Ascending aorta (tissue), 2 donors: ENCODE measurements at regions of chr11 and their contacts with region 1.

Region 1: GRCh38 chr11:64304316-64305072 is 830 bp upstream of the ESRRA start:
- DNase-seq: peak; percentile 73 to 96
- H3K4me3 ChIP-seq: peak overlapping the region; percentile 59 to 73
- H3K27ac ChIP-seq: peak overlapping the region; percentile 68 to 86
- H3K4me1 ChIP-seq: peaks cover 14 to 22% of the 10 kb centered on the region in 2 donors
- H3K27me3 ChIP-seq: no peaks in the 10 kb centered on the region
- CTCF ChIP-seq: peak; percentile 63 to 89 (median 80)

Region 2: GRCh38 chr11:63945477-63946163 is 358.9 kb before region 1 on chr11:
- intact Hi-C with region 1: no loop called
- DNase-seq: peak in 1 of 2 donors; percentile 86
- H3K4me3 ChIP-seq: peak overlapping the region; percentile 27 to 33
- H3K27ac ChIP-seq: peak overlapping the region; percentile 64 to 75
- H3K4me1 ChIP-seq: peaks cover 3 to 9% of the 10 kb centered on the region in 2 donors
- H3K27me3 ChIP-seq: no peaks in the 10 kb centered on the region
- CTCF ChIP-seq: peak; percentile 75 to 84 (median 81)

Region 3: GRCh38 chr11:64204464-64204989 is 100.0 kb before region 1 on chr11:
- intact Hi-C with region 1: loop called (anchors 1 kb)
- DNase-seq: peak; percentile 44 to 91
- H3K4me3 ChIP-seq: no peak overlapping the region
- H3K27ac ChIP-seq: no peak overlapping the region
- H3K4me1 ChIP-seq: no peaks in the 10 kb centered on the region
- H3K27me3 ChIP-seq: no peaks in the 10 kb centered on the region
- CTCF ChIP-seq: peak; percentile 72 to 82 (median 79)

Region 4: DNA sequence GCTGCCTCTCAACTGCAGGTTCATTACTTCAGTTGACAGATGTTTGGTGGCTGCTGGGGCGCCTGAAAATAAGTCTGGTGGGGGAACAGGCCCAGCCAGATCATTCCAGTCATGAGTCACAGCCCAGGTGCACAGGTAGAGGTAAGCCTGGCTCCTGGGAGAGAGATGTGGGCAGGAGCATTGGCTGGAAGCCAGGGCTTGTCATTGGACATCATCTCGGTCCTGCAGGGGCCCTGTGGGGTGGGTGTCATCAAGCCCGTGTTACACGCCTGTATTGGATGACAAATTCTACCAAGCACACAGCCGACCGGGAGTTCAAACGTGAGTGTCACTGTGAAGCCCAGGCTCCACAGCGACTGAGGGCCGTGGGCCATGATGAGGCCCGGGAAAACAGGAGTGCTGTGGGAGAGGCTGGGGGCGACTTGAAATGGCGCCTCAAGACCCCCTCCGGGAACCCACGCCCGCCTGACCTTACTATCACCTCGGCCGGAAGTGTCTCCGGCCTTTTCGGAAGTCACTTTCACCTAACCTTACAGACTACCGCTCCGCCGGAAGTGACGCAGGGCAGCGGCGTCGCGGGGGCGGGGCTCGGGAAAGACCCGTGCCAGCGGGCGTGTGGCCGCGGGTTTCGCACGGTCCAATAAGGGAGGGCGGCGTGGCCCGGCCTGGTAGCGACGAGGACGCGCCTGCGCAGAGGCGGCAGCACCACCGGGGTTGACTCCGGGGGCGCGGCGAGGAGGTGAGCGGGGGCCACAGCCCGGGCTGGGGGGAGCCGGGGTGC is 63.9 kb before region 1 on chr11 and contains the start of gene FKBP2:
- intact Hi-C with region 1: loop called (anchors 2 kb)
- DNase-seq: peak; percentile 95 to 99
- H3K4me3 ChIP-seq: peak within 1 kb of the TSS; percentile 91 to 97
- H3K27ac ChIP-seq: peak within 1 kb of the TSS; percentile 99
- H3K4me1 ChIP-seq: peaks cover 3 to 33% of the 10 kb centered on the region in 2 donors
- H3K27me3 ChIP-seq: no peaks in the 10 kb centered on the region
- CTCF ChIP-seq: no peak
- total RNA-seq, gene FKBP2: 17.7 TPM

Region 5: GRCh38 chr11:64269380-64270234 is 34.9 kb before region 1 on chr11:
- intact Hi-C with region 1: loop called (anchors 1 kb)
- DNase-seq: peak; percentile 96 to 99
- H3K4me3 ChIP-seq: peak overlapping the region; percentile 71 to 99
- H3K27ac ChIP-seq: peak overlapping the region; percentile 90 to 98
- H3K4me1 ChIP-seq: peaks cover 17 to 32% of the 10 kb centered on the region in 2 donors
- H3K27me3 ChIP-seq: no peaks in the 10 kb centered on the region
- CTCF ChIP-seq: peak in 2 of 3 experiments; percentile 15 to 35

Region 6: DNA sequence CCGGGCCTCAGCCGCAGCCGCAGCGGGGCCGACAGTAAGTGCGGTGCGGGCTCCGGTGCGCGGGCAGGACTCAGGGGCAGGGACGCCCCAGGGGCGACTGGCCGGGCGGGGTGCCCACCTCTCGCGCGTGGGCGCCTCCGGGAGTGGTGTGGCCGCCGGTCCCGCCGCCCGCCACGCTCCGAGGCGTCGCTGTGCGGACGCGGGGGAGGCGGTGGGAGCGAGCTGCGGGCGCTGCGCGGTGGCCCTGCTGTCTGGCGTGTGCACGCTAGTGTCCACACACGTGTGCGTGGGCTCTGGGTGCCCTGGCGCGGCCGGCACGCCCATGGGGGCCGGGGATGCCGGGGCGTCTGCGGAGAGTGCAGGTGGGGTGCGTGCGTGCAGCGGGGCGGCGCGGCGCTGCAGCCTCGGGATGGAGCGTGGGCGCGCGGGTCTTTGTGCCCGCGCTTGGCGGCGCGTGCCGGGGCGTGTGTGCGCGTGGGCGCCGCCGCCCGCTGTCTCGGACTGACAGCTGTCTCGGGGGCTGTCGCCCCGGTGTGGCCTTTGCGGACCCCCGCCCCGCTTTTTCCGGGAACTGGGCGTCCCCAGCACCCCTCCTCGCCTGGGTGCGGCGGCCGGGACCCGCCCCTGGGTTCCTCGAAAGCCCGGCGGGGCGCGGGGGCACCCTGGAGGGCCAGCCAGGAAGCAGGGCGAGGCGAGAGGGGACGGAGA is 12.6 kb before region 1 on chr11:
- intact Hi-C with region 1: no loop called
- DNase-seq: no peak
- H3K4me3 ChIP-seq: peak overlapping the region; percentile 47 to 61
- H3K27ac ChIP-seq: no peak overlapping the region
- H3K4me1 ChIP-seq: peaks cover 7 to 10% of the 10 kb centered on the region in 2 donors
- H3K27me3 ChIP-seq: peaks cover 15% of the 10 kb centered on the region
- CTCF ChIP-seq: no peak

Region 7: DNA sequence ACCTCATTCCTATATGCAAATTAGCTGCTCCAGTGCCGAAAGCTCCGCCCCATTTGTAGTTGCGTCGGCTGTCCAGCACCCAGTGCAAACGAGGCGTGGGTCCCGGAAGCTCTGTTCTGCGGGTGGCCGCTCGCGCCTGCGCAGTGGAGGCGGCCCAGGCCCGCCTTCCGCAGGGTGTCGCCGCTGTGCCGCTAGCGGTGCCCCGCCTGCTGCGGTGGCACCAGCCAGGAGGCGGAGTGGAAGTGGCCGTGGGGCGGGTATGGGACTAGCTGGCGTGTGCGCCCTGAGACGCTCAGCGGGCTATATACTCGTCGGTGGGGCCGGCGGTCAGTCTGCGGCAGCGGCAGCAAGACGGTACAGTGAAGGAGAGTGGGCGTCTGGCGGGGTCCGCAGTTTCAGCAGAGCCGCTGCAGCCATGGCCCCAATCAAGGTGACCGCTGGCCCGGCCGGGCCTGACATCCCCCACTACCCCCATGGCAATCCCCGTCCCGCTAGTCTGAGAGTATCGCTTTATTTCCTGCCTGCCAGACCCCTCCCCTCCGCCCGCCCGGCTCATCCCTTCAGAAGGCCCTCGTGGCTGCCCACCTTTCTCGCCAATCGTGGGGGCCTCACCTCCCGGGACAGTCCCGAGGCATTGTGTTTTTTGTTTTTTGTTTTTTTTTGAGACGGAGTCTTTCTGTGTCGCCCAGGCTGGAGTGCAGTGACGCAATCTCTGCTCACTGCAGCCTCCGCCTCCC is 13.6 kb after region 1 on chr11 and contains the start of gene PRDX5:
- intact Hi-C with region 1: loop called (anchors 1 kb)
- DNase-seq: peak; percentile 89 to 98
- H3K4me3 ChIP-seq: peak within 1 kb of the TSS; percentile 75 to 93
- H3K27ac ChIP-seq: peak within 1 kb of the TSS; percentile 95 to 99
- H3K4me1 ChIP-seq: peaks cover 7 to 10% of the 10 kb centered on the region in 2 donors
- H3K27me3 ChIP-seq: no peaks in the 10 kb centered on the region
- CTCF ChIP-seq: peak in 2 of 3 experiments; percentile 36 to 47
- total RNA-seq, gene PRDX5: 153 TPM

Region 8: GRCh38 chr11:64436000-64436399 is 131.5 kb after region 1 on chr11:
- intact Hi-C with region 1: no loop called
- DNase-seq: no peak
- H3K4me3 ChIP-seq: no peak overlapping the region
- H3K27ac ChIP-seq: no peak overlapping the region
- H3K4me1 ChIP-seq: peaks cover 0 to 7% of the 10 kb centered on the region in 2 donors
- H3K27me3 ChIP-seq: no peaks in the 10 kb centered on the region
- CTCF ChIP-seq: no peak